SK-N-SH (cell line): ENCODE measurements at regions of chr15 and their contacts with region 1.

Region 1: GRCh38 chr15:68304589-68305337 is 27.2 kb downstream of the FEM1B start:
- DNase-seq: no peak
- H3K4me3 ChIP-seq: no peak overlapping the region
- H3K27ac ChIP-seq: peak overlapping the region in 1 of 2 experiments; percentile 61; a peak in 2 of 4 replicates
- H3K4me1 ChIP-seq: no peaks in the 10 kb centered on the region; a peak in 1 of 4 replicates
- H3K27me3 ChIP-seq: no peaks in the 10 kb centered on the region
- CTCF ChIP-seq: no peak
- EP300 ChIP-seq: no peak
- RAD21 ChIP-seq: no peak

Region 2: GRCh38 chr15:68229386-68230156 is 75.2 kb before region 1 on chr15 and contains the start of gene CLN6:
- CTCF ChIA-PET with region 1: interaction called, 21 read pairs
- POLR2A ChIA-PET with region 1: no interaction called
- DNase-seq: peak; percentile 97
- H3K4me3 ChIP-seq: peak within 1 kb of the TSS; percentile 74 to 96
- H3K27ac ChIP-seq: peak within 1 kb of the TSS; percentile 52 to 85
- H3K4me1 ChIP-seq: peaks cover 10 to 41% of the 10 kb centered on the region in 2 experiments; a peak in 2 of 4 replicates
- H3K27me3 ChIP-seq: no peaks in the 10 kb centered on the region
- CTCF ChIP-seq: no peak
- EP300 ChIP-seq: no peak
- RAD21 ChIP-seq: no peak
- polyA plus RNA-seq, gene CLN6: 27.5 and 32.2 TPM in 2 replicates

Region 3: DNA sequence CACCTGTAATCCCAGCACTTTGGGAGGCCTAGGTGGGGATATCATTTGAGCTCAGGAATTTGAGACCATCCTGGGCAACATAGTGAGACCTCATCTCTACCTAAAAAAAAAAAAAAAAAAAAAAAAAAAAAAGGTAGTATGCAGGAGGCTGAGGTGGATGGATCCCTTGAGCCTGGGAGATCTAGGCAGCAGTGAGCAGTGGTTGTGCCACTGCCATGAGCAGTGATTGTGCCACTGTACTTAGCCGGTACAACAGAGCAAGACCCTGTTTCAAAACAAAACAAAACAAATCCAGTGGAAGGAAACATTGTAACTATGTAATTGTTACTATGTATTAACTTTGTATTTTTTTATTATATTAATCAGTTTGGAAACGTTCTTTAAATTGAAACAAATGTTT is 21.4 kb before region 1 on chr15:
- CTCF ChIA-PET with region 1: interaction called, 19 read pairs
- POLR2A ChIA-PET with region 1: interaction called, 16 read pairs
- DNase-seq: no peak
- H3K4me3 ChIP-seq: no peak overlapping the region
- H3K27ac ChIP-seq: no peak overlapping the region
- H3K4me1 ChIP-seq: peaks cover 9 to 31% of the 10 kb centered on the region in 2 experiments; a peak in 3 of 4 replicates
- H3K27me3 ChIP-seq: no peaks in the 10 kb centered on the region
- CTCF ChIP-seq: no peak
- EP300 ChIP-seq: no peak
- RAD21 ChIP-seq: no peak

Region 4: DNA sequence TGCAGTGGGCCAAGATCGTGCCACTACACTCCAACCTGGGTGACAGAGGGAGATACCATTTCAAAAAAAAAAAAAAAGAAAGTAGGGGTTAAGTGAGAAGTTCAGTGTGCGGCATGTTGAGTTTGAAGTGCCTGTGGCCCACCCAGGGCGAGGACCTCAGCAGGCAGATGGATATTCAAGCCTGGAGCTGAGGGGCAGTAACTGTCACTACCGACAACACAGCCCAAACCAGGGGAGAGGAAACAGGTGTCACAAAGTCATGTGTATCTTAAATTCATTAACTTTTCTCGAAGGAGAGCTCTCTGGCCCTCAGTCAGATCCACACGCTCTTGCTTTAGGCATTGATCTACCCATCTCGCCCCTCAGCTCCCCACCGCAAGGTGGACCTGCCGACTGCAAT is 18.0 kb after region 1 on chr15:
- CTCF ChIA-PET with region 1: interaction called, 75 read pairs
- POLR2A ChIA-PET with region 1: no interaction called
- DNase-seq: no peak
- H3K4me3 ChIP-seq: no peak overlapping the region
- H3K27ac ChIP-seq: no peak overlapping the region
- H3K4me1 ChIP-seq: no peaks in the 10 kb centered on the region
- H3K27me3 ChIP-seq: no peaks in the 10 kb centered on the region
- CTCF ChIP-seq: no peak
- EP300 ChIP-seq: no peak
- RAD21 ChIP-seq: no peak

Region 5: GRCh38 chr15:68349151-68349550 is 44.4 kb after region 1 on chr15:
- CTCF ChIA-PET with region 1: interaction called, 16 read pairs
- POLR2A ChIA-PET with region 1: no interaction called
- DNase-seq: no peak
- H3K4me3 ChIP-seq: no peak overlapping the region
- H3K27ac ChIP-seq: no peak overlapping the region
- H3K4me1 ChIP-seq: peaks cover 2 to 25% of the 10 kb centered on the region in 2 experiments; a peak in 3 of 4 replicates
- H3K27me3 ChIP-seq: no peaks in the 10 kb centered on the region
- CTCF ChIP-seq: no peak
- EP300 ChIP-seq: no peak
- RAD21 ChIP-seq: no peak

Region 6: DNA sequence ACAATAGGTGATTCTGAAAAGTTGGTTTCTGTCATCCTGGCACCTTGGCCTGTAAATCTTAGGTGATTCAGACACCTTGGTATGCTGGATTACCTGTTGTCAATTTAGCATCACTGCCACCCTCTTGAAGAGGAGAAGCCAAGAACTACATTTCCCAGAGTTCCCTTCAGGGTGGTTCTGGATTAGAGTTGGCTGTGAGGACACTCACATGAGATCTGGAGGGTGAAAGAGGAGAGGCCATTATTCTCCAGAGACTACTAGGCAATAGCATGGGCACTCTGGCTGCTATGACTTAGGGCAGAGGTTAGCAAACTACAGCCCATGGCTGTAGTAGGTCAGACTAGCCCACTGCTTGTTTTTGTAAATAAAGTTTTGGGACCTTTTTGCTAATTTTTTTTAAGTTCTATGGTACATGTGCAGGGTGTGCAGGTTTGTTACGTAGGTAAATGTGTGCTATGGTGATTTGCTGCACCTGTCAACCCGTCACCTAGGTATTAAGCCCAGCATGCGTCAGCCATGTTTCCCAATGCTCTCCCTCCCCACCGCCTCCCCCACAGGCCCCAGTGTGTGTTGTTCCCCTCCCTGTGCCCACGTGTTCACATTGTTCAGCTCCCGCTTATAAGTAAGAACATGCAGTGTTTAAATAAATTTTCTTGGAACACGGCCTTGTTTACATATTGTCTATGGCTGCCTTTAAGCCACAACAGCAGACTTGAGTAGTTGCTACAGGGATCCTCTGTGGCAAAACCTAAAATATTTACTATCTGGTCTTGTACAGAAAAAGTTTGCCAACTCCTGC is 232.5 kb after region 1 on chr15:
- CTCF ChIA-PET with region 1: interaction called, 11 read pairs
- POLR2A ChIA-PET with region 1: no interaction called
- DNase-seq: no peak
- H3K4me3 ChIP-seq: no peak overlapping the region
- H3K27ac ChIP-seq: peak overlapping the region in 1 of 2 experiments; percentile 81; a peak in 2 of 4 replicates
- H3K4me1 ChIP-seq: peaks cover 0 to 4% of the 10 kb centered on the region in 2 experiments; a peak in 1 of 4 replicates
- H3K27me3 ChIP-seq: no peaks in the 10 kb centered on the region
- CTCF ChIP-seq: no peak
- EP300 ChIP-seq: no peak
- RAD21 ChIP-seq: no peak

Region 7: GRCh38 chr15:68875377-68876116 is 570.8 kb after region 1 on chr15:
- CTCF ChIA-PET with region 1: interaction called, 17 read pairs
- POLR2A ChIA-PET with region 1: no interaction called
- DNase-seq: peak; percentile 78
- H3K4me3 ChIP-seq: peak overlapping the region in 1 of 2 experiments; percentile 52; a peak in 2 of 4 replicates
- H3K27ac ChIP-seq: no peak overlapping the region
- H3K4me1 ChIP-seq: no peaks in the 10 kb centered on the region
- H3K27me3 ChIP-seq: peaks cover 11% of the 10 kb centered on the region; the same call in 1 of the 2 replicates
- CTCF ChIP-seq: peak; percentile 93
- EP300 ChIP-seq: no peak
- RAD21 ChIP-seq: peak; percentile 97